WTC11 (cell line): ENCODE measurements at regions of chr5 and their contacts with region 1.

Region 1: GRCh38 chr5:106269252-106269843 is 1401.4 kb downstream of the EFNA5 start:
- DNase-seq: no peak
- ATAC-seq: peak; percentile 73
- H3K4me3 Mint-ChIP-seq: no peak overlapping the region
- H3K27ac Mint-ChIP-seq: no peak overlapping the region
- H3K4me1 Mint-ChIP-seq: peaks cover 10% of the 10 kb centered on the region
- H3K27me3 Mint-ChIP-seq: no peaks in the 10 kb centered on the region
- CTCF ChIP-seq: peak; percentile 22; the same call in 1 of the 2 replicates

Region 2: GRCh38 chr5:106076655-106077054 is 192.7 kb before region 1 on chr5:
- CTCF ChIA-PET with region 1: no interaction called
- POLR2A ChIA-PET with region 1: no interaction called
- DNase-seq: no peak
- ATAC-seq: no peak
- H3K4me3 Mint-ChIP-seq: no peak overlapping the region
- H3K27ac Mint-ChIP-seq: no peak overlapping the region
- H3K4me1 Mint-ChIP-seq: peaks cover 14% of the 10 kb centered on the region
- H3K27me3 Mint-ChIP-seq: no peaks in the 10 kb centered on the region
- CTCF ChIP-seq: no peak

Region 3: DNA sequence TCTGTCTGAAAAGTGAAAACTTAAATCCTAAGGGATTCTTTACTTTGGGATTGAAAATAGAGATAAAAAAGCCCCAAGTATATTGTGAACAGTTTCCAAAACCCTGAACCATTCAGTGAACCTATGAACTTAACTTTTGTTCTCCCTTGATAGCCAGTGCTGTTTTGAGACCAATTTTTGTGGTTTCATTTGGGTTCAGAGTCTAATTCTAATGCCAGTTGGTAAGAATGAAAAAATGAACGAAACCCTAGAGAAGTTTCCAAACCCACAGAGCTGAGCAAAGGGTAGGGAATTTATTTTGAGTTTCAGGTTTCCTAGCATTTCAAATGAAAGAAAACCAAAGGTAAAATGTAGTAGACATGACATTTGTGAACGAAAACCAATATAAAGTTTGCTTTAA is 34.6 kb after region 1 on chr5:
- CTCF ChIA-PET with region 1: interaction called, 10 read pairs
- POLR2A ChIA-PET with region 1: no interaction called
- DNase-seq: no peak
- ATAC-seq: no peak
- H3K4me3 Mint-ChIP-seq: no peak overlapping the region
- H3K27ac Mint-ChIP-seq: no peak overlapping the region
- H3K4me1 Mint-ChIP-seq: peaks cover 34% of the 10 kb centered on the region
- H3K27me3 Mint-ChIP-seq: no peaks in the 10 kb centered on the region
- CTCF ChIP-seq: no peak